PC-9 (cell line): ENCODE measurements at regions of chr5 and their contacts with region 1.

Region 1: GRCh38 chr5:147822686-147823491 is 8.6 kb downstream of the SPINK1 start:
- DNase-seq: peak in 1 of 2 experiments; percentile 11
- H3K4me3 ChIP-seq: no peak overlapping the region
- H3K27ac ChIP-seq: no peak overlapping the region
- H3K4me1 ChIP-seq: no peaks in the 10 kb centered on the region
- H3K27me3 ChIP-seq: peaks cover 9% of the 10 kb centered on the region; the same call in 1 of the 2 replicates
- CTCF ChIP-seq: peak; percentile 83

Region 2: DNA sequence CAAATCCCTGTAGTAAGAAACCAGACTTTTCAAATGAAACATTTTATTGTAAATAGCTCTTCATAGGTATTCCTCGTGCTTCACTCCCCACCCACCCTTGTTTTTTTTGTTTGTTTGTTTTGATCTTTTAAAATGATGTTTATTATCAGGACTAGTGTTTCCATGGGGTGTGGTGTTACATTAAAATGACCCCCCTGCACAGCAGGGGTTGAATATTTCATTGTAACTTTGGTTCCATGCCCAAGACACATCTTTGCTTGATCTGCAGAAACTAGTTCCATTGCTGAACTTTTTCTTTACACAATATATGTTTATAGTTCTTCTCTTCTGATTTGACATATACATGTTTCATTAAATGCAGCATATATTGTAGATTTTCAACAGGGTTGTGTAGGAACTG is 231.8 kb before region 1 on chr5:
- CTCF ChIA-PET with region 1: no interaction called
- POLR2A ChIA-PET with region 1: no interaction called
- intact Hi-C with region 1: no loop called
- DNase-seq: no peak
- H3K4me3 ChIP-seq: no peak overlapping the region
- H3K27ac ChIP-seq: no peak overlapping the region
- H3K4me1 ChIP-seq: no peaks in the 10 kb centered on the region
- H3K27me3 ChIP-seq: no peaks in the 10 kb centered on the region
- CTCF ChIP-seq: no peak

Region 3: DNA sequence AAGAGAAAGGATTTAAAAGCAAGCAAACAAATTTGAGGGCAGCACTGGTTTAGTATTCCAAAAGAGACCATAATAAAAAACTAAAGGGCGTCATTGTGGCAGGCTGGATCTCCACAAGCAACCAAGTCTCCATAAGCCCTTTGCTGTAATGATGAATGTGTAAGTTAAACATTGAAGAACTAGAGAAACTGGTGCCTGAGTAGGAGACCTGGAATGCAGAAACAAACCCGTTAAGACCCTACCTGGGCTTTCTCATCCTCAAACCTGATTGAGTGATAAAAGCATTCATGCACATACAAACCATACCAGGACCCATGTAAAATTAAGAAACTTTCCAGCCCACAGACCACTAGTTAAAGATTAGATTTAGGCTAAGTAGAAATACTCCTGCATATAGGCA is 53.7 kb after region 1 on chr5:
- CTCF ChIA-PET with region 1: no interaction called
- POLR2A ChIA-PET with region 1: no interaction called
- intact Hi-C with region 1: loop called (anchors 2 kb)
- DNase-seq: no peak
- H3K4me3 ChIP-seq: no peak overlapping the region
- H3K27ac ChIP-seq: no peak overlapping the region
- H3K4me1 ChIP-seq: no peaks in the 10 kb centered on the region
- H3K27me3 ChIP-seq: no peaks in the 10 kb centered on the region
- CTCF ChIP-seq: no peak